Mammary epithelial cell (primary cell): ENCODE measurements at regions of chr16 and their contacts with region 1.

Region 1: GRCh38 chr16:85437166-85438055 is 175.7 kb upstream of the GSE1 start:
- DNase-seq: no peak
- H3K4me3 ChIP-seq: no peak overlapping the region
- H3K27ac ChIP-seq: no peak overlapping the region
- H3K4me1 ChIP-seq: no peaks in the 10 kb centered on the region
- H3K27me3 ChIP-seq: no peaks in the 10 kb centered on the region
- CTCF ChIP-seq: no peak

Region 2: DNA sequence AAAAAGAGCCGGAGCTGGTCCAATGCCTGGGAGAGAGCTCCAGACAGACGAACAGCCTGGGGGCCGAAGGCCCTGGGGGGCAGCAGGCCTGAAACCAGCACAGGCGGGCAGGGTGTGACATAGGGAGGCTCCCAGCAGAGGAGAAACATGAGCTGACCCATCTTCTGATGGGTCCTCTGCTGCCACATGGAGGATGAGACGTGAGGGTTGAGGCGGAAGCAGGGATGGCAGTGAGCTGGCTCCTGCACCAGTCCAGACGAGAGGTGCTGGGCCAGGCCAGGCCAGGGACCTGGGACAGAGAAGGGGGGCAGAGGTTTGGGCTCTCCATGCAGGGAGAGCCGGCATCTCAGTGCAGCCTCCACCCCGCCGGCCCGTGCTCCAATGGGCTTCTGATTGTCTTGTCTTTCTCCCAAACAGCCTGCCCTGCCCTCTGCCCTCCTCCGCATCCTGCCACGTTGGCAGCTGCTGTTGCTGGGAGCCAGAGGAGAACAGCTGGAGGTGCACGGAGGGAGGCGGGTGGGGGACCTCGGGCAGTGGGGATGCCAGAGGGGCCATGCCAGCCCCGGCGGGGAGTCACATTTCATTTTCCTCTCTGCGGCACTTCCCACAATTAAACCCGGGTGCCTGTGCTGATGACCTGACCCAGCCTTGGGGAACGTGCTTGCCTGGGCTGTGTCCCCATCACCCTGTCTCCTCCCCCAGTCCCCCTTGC is 36.7 kb after region 1 on chr16:
- CTCF ChIA-PET with region 1: no interaction called
- dilution Hi-C with region 1: loop called (anchors 5 kb)
- in situ Hi-C with region 1: no loop called
- intact Hi-C with region 1: no loop called
- DNase-seq: no peak
- H3K4me3 ChIP-seq: no peak overlapping the region
- H3K27ac ChIP-seq: no peak overlapping the region
- H3K4me1 ChIP-seq: peaks cover 6% of the 10 kb centered on the region
- H3K27me3 ChIP-seq: peaks cover 2% of the 10 kb centered on the region
- CTCF ChIP-seq: no peak